PC-9 (cell line): ENCODE measurements at regions of chr21 and their contacts with region 1.

Region 1: DNA sequence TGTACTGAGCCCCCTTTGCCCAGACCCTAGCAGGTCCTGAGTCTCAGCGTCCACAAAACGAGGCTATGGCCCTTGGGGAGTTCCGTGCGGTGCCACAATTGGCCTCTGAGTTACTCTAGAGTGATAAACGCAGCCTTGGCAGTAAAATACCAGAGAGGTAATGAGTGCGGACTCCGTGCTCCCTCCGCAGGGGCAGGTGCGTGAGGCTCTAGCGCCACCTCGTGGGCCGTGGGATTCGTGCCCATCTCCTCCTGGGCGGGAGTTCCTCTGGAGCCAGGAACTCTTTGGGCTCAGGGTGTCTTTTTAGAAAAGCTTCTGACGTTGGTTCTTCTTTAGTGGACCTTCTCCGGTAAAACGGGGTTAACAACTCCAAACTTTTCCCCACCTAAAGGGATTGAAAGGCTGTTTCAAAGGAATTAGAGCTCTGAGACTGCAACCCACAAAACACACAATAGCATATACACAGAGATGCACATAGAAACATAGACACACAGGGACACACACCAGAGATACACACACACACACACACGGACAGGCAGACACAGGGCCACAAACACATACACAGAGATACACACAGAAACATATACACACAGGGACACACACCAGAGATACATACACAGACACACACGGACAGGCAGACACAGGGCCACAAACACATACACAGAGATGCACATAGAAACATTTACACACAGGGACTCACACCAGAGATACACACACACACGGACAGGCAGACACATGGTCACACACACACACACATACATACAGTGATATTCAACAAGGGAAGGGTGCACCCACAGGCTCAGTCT is 99.4 kb downstream of the KCNJ15 start:
- DNase-seq: peak in 1 of 2 experiments; percentile 53
- H3K4me3 ChIP-seq: no peak overlapping the region
- H3K27ac ChIP-seq: no peak overlapping the region
- H3K4me1 ChIP-seq: no peaks in the 10 kb centered on the region
- H3K27me3 ChIP-seq: peaks cover 12% of the 10 kb centered on the region; the same call in 1 of the 2 replicates
- CTCF ChIP-seq: peak; percentile 81

Region 2: GRCh38 chr21:37711836-37712568 is 644.2 kb before region 1 on chr21:
- CTCF ChIA-PET with region 1: no interaction called
- POLR2A ChIA-PET with region 1: no interaction called
- intact Hi-C with region 1: loop called (anchors 10 kb)
- DNase-seq: peak in 1 of 2 experiments; percentile 45
- H3K4me3 ChIP-seq: no peak overlapping the region
- H3K27ac ChIP-seq: no peak overlapping the region
- H3K4me1 ChIP-seq: peaks cover 5% of the 10 kb centered on the region; the same call in 1 of the 2 replicates
- H3K27me3 ChIP-seq: peaks cover 7% of the 10 kb centered on the region; the same call in 1 of the 2 replicates
- CTCF ChIP-seq: peak; percentile 73

Region 3: GRCh38 chr21:38159355-38159754 is 196.8 kb before region 1 on chr21:
- CTCF ChIA-PET with region 1: no interaction called
- POLR2A ChIA-PET with region 1: no interaction called
- intact Hi-C with region 1: loop called (anchors 1 kb)
- DNase-seq: peak in 1 of 2 experiments; percentile 21
- H3K4me3 ChIP-seq: no peak overlapping the region
- H3K27ac ChIP-seq: no peak overlapping the region
- H3K4me1 ChIP-seq: no peaks in the 10 kb centered on the region
- H3K27me3 ChIP-seq: no peaks in the 10 kb centered on the region; the same call in 1 of the 2 replicates
- CTCF ChIP-seq: peak; percentile 72

Region 4: GRCh38 chr21:38219049-38219628 is 137.1 kb before region 1 on chr21:
- CTCF ChIA-PET with region 1: no interaction called
- POLR2A ChIA-PET with region 1: no interaction called
- intact Hi-C with region 1: loop called (anchors 2 kb)
- DNase-seq: peak in 1 of 2 experiments; percentile 25
- H3K4me3 ChIP-seq: no peak overlapping the region
- H3K27ac ChIP-seq: no peak overlapping the region
- H3K4me1 ChIP-seq: no peaks in the 10 kb centered on the region
- H3K27me3 ChIP-seq: no peaks in the 10 kb centered on the region
- CTCF ChIP-seq: peak; percentile 83

Region 5: GRCh38 chr21:38244885-38245545 is 111.2 kb before region 1 on chr21:
- CTCF ChIA-PET with region 1: no interaction called
- POLR2A ChIA-PET with region 1: no interaction called
- intact Hi-C with region 1: no loop called
- DNase-seq: no peak
- H3K4me3 ChIP-seq: no peak overlapping the region
- H3K27ac ChIP-seq: no peak overlapping the region
- H3K4me1 ChIP-seq: no peaks in the 10 kb centered on the region
- H3K27me3 ChIP-seq: peaks cover 4% of the 10 kb centered on the region; the same call in 1 of the 2 replicates
- CTCF ChIP-seq: no peak